ENCODE measurements at regions of chr2 and their contacts with region 1.

Region 1: GRCh38 chr2:101012706-101013181 is 10.7 kb downstream of the RPL31 start:
- DNase-seq: no peak
- ATAC-seq: peak in 1 of 2 donors; percentile 9
- H3K4me3 ChIP-seq: no peak overlapping the region
- H3K27ac ChIP-seq: no peak overlapping the region
- H3K4me1 ChIP-seq: no peaks in the 10 kb centered on the region
- H3K27me3 ChIP-seq: no peaks in the 10 kb centered on the region

Region 2: GRCh38 chr2:100902833-100903405 is 109.8 kb before region 1 on chr2:
- intact Hi-C with region 1: no loop called
- DNase-seq: no peak
- ATAC-seq: peak in 1 of 2 donors; percentile 70
- H3K4me3 ChIP-seq: no peak overlapping the region
- H3K27ac ChIP-seq: no peak overlapping the region
- H3K4me1 ChIP-seq: peaks cover 4% of the 10 kb centered on the region
- H3K27me3 ChIP-seq: no peaks in the 10 kb centered on the region

Region 3: GRCh38 chr2:101205521-101205998 is 192.8 kb after region 1 on chr2:
- intact Hi-C with region 1: loop called in 2 of 4 experiments (anchors 5 to 10 kb)
- DNase-seq: peak; percentile 50 to 73 (median 60)
- ATAC-seq: peak; percentile 78 to 86
- H3K4me3 ChIP-seq: peak overlapping the region; percentile 39
- H3K27ac ChIP-seq: no peak overlapping the region
- H3K4me1 ChIP-seq: no peaks in the 10 kb centered on the region
- H3K27me3 ChIP-seq: no peaks in the 10 kb centered on the region